Gastrocnemius medialis (tissue), 4 donors: ENCODE measurements at regions of chr2 and their contacts with region 1.

Region 1: GRCh38 chr2:221573430-221574230 is 1.5 kb upstream of the EPHA4 start:
- DNase-seq: peak; percentile 62 to 68
- ATAC-seq: peak; percentile 73 to 74
- H3K4me3 ChIP-seq: peak overlapping the region; percentile 86 to 95 (median 90)
- H3K27ac ChIP-seq: peak overlapping the region; percentile 65 to 88 (median 80)
- H3K4me1 ChIP-seq: peaks cover 8 to 12% of the 10 kb centered on the region in 2 donors
- H3K27me3 ChIP-seq: peaks cover 0 to 3% (median 0%) of the 10 kb centered on the region in 3 donors
- CTCF ChIP-seq: peak; percentile 97 to 100 (median 97)
- POLR2A ChIP-seq: peak in 1 of 2 donors; percentile 19

Region 2: GRCh38 chr2:219736209-219736608 is 1837.4 kb before region 1 on chr2:
- in situ Hi-C with region 1: loop called in 3 of 4 experiments (anchors 25 kb)
- intact Hi-C with region 1: loop called (anchors 2 kb)
- DNase-seq: no peak
- ATAC-seq: peak in 1 of 2 donors; percentile 23
- H3K4me3 ChIP-seq: no peak overlapping the region
- H3K27ac ChIP-seq: no peak overlapping the region
- H3K4me1 ChIP-seq: peaks cover 0 to 5% of the 10 kb centered on the region in 2 donors
- H3K27me3 ChIP-seq: no peaks in the 10 kb centered on the region
- CTCF ChIP-seq: peak in 4 of 5 experiments; percentile 16 to 46 (median 34)
- POLR2A ChIP-seq: no peak

Region 3: GRCh38 chr2:220053919-220054318 is 1519.7 kb before region 1 on chr2:
- in situ Hi-C with region 1: no loop called
- intact Hi-C with region 1: no loop called
- DNase-seq: no peak
- ATAC-seq: no peak
- H3K4me3 ChIP-seq: no peak overlapping the region
- H3K27ac ChIP-seq: no peak overlapping the region
- H3K4me1 ChIP-seq: no peaks in the 10 kb centered on the region
- H3K27me3 ChIP-seq: no peaks in the 10 kb centered on the region
- CTCF ChIP-seq: no peak
- POLR2A ChIP-seq: no peak

Region 4: GRCh38 chr2:220687231-220687843 is 886.3 kb before region 1 on chr2:
- in situ Hi-C with region 1: loop called (anchors 5 kb)
- intact Hi-C with region 1: loop called (anchors 1 kb)
- DNase-seq: peak; percentile 46 to 53
- ATAC-seq: peak; percentile 80 to 90
- H3K4me3 ChIP-seq: no peak overlapping the region
- H3K27ac ChIP-seq: no peak overlapping the region
- H3K4me1 ChIP-seq: no peaks in the 10 kb centered on the region
- H3K27me3 ChIP-seq: no peaks in the 10 kb centered on the region
- CTCF ChIP-seq: peak; percentile 62 to 87 (median 77)
- POLR2A ChIP-seq: no peak

Region 5: DNA sequence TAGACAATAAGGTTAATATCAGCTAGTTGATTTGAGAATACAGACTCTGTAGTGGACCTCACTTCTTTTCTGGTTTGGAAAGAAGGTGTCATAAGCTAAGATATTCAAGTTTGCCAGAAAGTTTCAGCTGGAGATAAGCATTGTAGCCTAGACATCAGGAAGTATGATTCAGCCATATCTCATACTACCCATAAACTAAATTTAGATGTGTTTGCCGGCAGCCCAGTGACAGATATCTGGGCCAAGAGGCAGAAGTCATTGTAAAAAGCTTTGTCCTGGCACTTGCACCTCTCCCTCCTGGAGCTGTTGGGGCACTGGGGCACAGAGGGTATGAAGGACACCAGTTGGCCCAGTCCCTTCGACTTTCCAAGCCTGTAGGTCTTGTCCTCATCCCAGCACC is 129.5 kb before region 1 on chr2:
- in situ Hi-C with region 1: no loop called
- intact Hi-C with region 1: loop called (anchors 10 kb)
- DNase-seq: peak; percentile 9 to 26
- ATAC-seq: peak; percentile 92 to 94
- H3K4me3 ChIP-seq: no peak overlapping the region
- H3K27ac ChIP-seq: peak overlapping the region; percentile 59 to 80 (median 62)
- H3K4me1 ChIP-seq: peaks cover 7 to 16% of the 10 kb centered on the region in 2 donors
- H3K27me3 ChIP-seq: no peaks in the 10 kb centered on the region
- CTCF ChIP-seq: no peak
- POLR2A ChIP-seq: no peak